ENCODE measurements at regions of chr12 and their contacts with region 1.

Region 1: DNA sequence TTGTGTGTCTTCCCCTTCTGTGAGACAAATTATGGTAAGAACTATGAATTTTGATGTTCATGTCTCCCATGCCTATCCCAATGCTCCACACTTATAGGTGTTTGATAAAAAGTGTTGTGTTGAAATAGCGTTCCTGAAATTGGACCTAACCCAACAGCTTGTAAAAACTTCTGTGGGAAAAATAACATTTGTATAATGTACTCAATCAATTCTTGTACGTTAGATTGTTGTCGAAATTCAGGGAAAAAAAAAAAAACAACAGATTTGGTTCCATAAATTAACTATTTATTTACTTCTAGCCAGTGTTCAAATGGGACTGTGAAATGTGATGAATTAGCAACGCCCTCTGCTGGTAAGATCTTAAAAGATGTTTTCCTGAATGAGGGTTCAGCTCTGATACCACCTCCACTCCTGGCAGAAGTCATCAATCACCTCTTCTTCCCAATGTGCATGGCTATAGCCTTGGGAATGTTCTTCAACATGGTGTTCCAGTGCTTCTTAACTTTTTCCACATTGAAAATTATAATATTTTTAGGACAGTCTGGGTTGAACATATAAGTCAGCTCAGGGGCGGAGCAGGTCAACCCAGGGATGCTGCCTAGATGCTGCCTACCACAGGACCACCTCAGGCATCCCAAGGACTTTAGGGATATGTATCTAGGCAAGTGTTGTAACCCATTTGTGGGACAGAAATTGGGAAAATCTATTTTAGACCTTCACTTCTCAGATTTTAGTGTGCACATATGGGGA is 170.6 kb downstream of the OTOGL start:
- DNase-seq: peak; percentile 60
- ATAC-seq: peak; percentile 64
- H3K4me3 ChIP-seq: no peak overlapping the region
- H3K27ac ChIP-seq: no peak overlapping the region
- H3K4me1 ChIP-seq: peaks cover 4% of the 10 kb centered on the region
- H3K27me3 ChIP-seq: no peaks in the 10 kb centered on the region
- CTCF ChIP-seq: peak; percentile 70
- POLR2A ChIP-seq: no peak
- RAD21 ChIP-seq: peak; percentile 66

Region 2: DNA sequence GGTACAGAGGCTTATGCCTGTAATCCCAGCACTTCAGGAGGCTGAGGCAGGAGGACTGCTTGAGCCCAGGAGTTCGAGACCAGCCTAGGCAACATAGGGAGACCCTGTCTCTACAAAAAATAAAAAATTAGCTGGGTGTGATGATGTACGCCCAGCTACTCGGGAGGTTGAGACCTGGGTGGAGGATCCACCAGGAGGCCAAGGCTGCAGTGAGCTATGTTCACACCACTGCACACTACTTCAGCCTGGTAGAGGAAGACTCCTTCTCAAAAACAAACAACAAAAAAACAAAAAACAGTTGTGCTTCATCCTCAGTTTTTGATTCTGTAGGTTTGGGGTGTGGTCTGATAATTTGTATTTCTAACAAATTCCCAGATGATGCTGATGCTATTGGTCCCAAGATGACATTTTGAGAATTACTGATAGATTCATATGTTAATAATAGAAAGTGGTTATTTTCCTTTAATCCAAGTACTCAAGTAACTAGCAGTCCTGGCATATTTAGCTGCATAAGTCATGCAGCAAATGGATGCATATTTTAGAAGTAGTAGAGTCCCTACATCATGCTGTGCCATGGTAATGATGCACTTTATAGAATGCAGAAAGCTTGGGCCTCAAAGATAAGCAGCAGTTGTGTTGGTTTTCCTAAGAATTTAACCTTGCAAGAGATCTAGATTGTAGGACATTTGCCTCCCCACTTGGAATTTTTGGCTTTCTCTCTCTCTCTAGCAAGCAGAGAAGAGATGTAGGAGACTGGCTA is 503.1 kb before region 1 on chr12:
- CTCF ChIA-PET with region 1: no interaction called
- POLR2A ChIA-PET with region 1: no interaction called
- dilution Hi-C with region 1: no loop called
- in situ Hi-C with region 1: no loop called
- intact Hi-C with region 1: no loop called
- DNase-seq: peak; percentile 52
- ATAC-seq: peak; percentile 66
- H3K4me3 ChIP-seq: no peak overlapping the region
- H3K27ac ChIP-seq: no peak overlapping the region
- H3K4me1 ChIP-seq: peaks cover 2% of the 10 kb centered on the region; the same call in 1 of the 2 replicates
- H3K27me3 ChIP-seq: no peaks in the 10 kb centered on the region
- CTCF ChIP-seq: no peak
- POLR2A ChIP-seq: no peak
- RAD21 ChIP-seq: no peak

Region 3: GRCh38 chr12:79886917-79887519 is 383.0 kb before region 1 on chr12:
- CTCF ChIA-PET with region 1: no interaction called
- POLR2A ChIA-PET with region 1: no interaction called
- dilution Hi-C with region 1: no loop called
- in situ Hi-C with region 1: no loop called
- intact Hi-C with region 1: loop called (anchors 5 kb)
- DNase-seq: peak; percentile 66
- ATAC-seq: peak; percentile 69
- H3K4me3 ChIP-seq: no peak overlapping the region
- H3K27ac ChIP-seq: no peak overlapping the region
- H3K4me1 ChIP-seq: peaks cover 2% of the 10 kb centered on the region
- H3K27me3 ChIP-seq: no peaks in the 10 kb centered on the region
- CTCF ChIP-seq: peak; percentile 57
- POLR2A ChIP-seq: no peak
- RAD21 ChIP-seq: peak; percentile 60

Region 4: DNA sequence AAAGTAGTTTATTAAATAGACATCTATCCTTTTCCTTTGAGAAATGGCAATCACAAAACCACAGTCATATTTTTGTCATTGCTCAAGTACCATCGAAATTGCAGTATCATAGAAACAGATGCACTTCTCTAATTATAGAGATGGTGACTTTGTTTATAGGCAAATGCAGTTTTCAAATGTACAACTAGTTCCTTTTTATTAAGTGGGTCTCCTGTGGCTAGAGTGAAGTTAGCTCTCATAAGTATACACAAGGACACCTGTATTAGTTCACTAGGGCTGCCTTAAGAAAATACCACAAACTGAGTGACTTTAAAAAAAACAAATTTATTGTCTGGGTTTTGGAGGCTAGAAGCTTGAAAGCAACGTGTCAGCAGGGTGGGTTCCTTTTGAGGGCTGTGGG is 107.8 kb before region 1 on chr12:
- CTCF ChIA-PET with region 1: no interaction called
- POLR2A ChIA-PET with region 1: no interaction called
- dilution Hi-C with region 1: no loop called
- in situ Hi-C with region 1: no loop called
- intact Hi-C with region 1: no loop called
- DNase-seq: no peak
- ATAC-seq: no peak
- H3K4me3 ChIP-seq: no peak overlapping the region
- H3K27ac ChIP-seq: no peak overlapping the region
- H3K4me1 ChIP-seq: peaks cover 1% of the 10 kb centered on the region; the same call in 1 of the 2 replicates
- H3K27me3 ChIP-seq: no peaks in the 10 kb centered on the region
- CTCF ChIP-seq: no peak
- POLR2A ChIP-seq: no peak
- RAD21 ChIP-seq: no peak

Region 5: GRCh38 chr12:80200408-80200807 is 69.6 kb before region 1 on chr12:
- CTCF ChIA-PET with region 1: interaction called, 46 read pairs
- POLR2A ChIA-PET with region 1: no interaction called
- dilution Hi-C with region 1: no loop called
- in situ Hi-C with region 1: loop called (anchors 5 kb)
- intact Hi-C with region 1: loop called (anchors 1 kb)
- DNase-seq: no peak
- ATAC-seq: no peak
- H3K4me3 ChIP-seq: no peak overlapping the region
- H3K27ac ChIP-seq: no peak overlapping the region
- H3K4me1 ChIP-seq: no peaks in the 10 kb centered on the region
- H3K27me3 ChIP-seq: no peaks in the 10 kb centered on the region
- CTCF ChIP-seq: no peak
- POLR2A ChIP-seq: no peak
- RAD21 ChIP-seq: no peak